ENCODE measurements at regions of chr7 and their contacts with region 1.

Region 1: GRCh38 chr7:80922196-80922595 is 3.3 kb upstream of the SEMA3C start:
- DNase-seq: no peak
- ATAC-seq: no peak

Region 2: DNA sequence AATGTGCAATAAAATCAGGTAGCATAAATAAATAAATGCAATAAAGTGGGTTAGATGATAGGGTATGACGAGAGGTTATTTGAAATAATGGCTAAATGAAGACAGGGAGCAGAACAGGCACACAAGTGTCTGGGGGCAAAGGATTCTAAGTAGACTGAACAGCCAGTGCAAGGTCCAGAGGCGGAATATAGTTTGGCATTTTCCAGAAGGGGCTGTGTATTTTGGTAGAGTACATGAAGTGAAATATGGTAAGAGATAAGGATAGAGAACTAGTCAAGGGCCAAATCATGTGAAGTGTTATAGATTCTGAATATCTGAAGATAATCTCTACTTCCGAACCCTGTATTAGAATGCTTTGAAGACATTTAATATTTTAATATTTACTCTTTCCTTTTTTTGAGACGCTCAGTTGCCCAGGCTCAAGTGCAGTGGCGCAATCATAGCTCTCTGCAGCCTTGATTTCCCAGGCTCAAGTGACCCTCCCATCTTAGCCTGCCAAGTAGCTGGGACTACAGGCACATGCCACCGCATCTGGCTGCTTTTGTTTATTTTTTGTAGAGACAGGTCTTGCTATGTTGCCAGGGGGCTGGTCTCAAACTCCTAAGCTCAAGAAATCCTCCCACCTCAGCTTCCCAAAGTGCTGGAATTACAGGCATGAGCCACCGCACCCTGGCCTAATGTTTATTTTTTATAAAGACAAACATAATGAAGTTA is 328.2 kb before region 1 on chr7:
- intact Hi-C with region 1: no loop called
- DNase-seq: no peak
- ATAC-seq: peak in 1 of 2 donors; percentile 53

Region 3: GRCh38 chr7:81256991-81257390 is 334.8 kb after region 1 on chr7:
- intact Hi-C with region 1: loop called in 1 of 2 experiments (anchors 1 kb)
- DNase-seq: no peak
- ATAC-seq: peak; percentile 59 to 61

Measured in left cardiac atrium (tissue), 4 donors.